ENCODE measurements at regions of chr14 and their contacts with region 1.

Region 1: DNA sequence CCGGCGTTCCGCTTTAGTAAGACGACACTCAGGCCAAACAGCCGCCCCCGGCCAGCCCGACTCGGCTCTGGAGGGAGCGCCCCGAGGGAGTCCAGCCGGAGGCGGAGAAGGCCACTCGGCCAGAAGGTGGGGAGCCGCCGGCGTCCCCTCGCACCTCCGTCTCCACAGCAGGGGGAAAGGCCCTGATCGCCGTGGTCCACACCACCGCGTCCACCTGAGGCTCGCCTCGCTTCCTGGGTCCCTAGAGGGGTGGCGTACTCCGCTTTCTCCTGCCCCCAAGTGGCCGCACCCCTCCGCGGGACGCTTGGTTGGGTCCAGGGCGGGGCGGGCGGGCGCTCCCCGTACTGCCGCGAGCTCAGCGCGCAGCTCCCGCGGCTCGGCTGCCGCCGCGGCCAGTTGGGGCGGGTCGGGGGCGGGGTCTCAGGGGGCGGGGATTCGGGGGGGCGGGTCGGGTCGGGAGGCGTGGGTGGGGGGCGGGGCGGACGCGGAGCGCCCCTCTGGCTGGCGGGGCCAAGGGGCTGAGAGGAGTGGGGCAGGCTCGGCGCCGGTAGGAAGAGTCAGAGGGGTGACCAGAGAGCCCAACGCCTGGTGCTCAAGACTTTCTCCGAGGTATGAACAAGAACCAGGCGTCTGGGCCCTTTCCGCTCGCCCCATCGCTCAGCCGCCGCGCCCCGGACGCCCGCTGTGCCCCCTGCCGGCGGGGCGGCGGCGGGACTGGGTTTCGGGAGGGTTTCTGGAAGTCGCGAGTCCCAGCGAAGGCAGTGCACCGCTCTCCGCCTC is at the start of gene FRMD6:
- DNase-seq: peak; percentile 83
- H3K4me3 ChIP-seq: peak within 1 kb of the TSS; percentile 89 to 96 (median 93)
- H3K27ac ChIP-seq: peak within 1 kb of the TSS; percentile 96
- H3K4me1 ChIP-seq: peaks cover 43% of the 10 kb centered on the region
- H3K27me3 ChIP-seq: no peaks in the 10 kb centered on the region
- CTCF ChIP-seq: peak; percentile 73 to 75
- POLR2A ChIP-seq: peak; percentile 81
- total RNA-seq, gene FRMD6: 92.2 and 97.1 TPM in 2 replicates

Region 2: DNA sequence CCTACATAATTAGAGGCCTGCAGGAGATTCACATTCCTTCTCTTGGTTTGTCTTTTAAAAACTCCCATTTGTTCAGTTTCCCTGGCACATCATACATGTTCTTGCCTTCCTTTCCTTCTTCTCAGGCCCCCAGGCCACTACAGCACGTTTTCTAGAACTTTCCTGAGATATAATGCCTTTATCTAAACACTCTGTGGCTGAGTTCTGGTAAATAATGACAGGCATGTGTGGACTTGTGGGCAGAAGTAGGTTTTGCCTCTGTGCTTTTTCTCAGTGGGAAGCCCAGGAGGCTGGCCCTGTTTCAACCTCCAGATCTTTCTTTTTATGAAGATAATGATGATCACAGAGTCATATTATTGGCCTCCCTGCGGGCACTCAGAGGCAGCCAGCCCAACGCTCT is 294.3 kb before region 1 on chr14:
- CTCF ChIA-PET with region 1: no interaction called
- POLR2A ChIA-PET with region 1: no interaction called
- dilution Hi-C with region 1: no loop called
- intact Hi-C with region 1: no loop called
- DNase-seq: no peak
- H3K4me3 ChIP-seq: no peak overlapping the region
- H3K27ac ChIP-seq: no peak overlapping the region
- H3K4me1 ChIP-seq: peaks cover 9% of the 10 kb centered on the region
- H3K27me3 ChIP-seq: no peaks in the 10 kb centered on the region
- CTCF ChIP-seq: no peak
- POLR2A ChIP-seq: no peak

Region 3: GRCh38 chr14:51382506-51382905 is 269.1 kb before region 1 on chr14:
- CTCF ChIA-PET with region 1: interaction called, 10 read pairs
- POLR2A ChIA-PET with region 1: no interaction called
- dilution Hi-C with region 1: no loop called
- intact Hi-C with region 1: no loop called
- DNase-seq: no peak
- H3K4me3 ChIP-seq: no peak overlapping the region
- H3K27ac ChIP-seq: no peak overlapping the region
- H3K4me1 ChIP-seq: peaks cover 11% of the 10 kb centered on the region
- H3K27me3 ChIP-seq: no peaks in the 10 kb centered on the region
- CTCF ChIP-seq: no peak
- POLR2A ChIP-seq: no peak

Region 4: DNA sequence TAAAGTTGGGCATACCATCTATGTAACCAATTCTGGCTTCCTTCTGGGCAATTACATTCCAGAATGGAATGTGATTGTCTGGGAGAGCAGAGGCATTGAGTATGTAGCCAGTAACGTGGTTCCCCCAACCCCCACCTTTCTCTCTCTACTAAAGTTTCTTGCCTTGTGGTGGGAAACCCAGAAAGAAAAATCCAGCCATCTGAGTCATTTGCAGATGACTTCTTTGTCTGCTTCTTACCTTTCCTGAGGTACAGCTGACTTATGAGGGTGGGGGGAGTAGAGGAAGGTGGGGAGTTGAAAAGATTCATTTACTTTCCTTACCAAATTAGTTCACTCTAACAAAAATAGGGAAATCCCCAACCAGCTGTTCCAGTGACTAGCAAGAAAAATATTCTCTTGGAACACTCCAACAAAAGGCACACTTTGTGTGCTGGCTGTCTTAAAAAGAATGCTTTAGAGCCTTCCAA is 112.0 kb before region 1 on chr14:
- CTCF ChIA-PET with region 1: interaction called, 13 read pairs
- POLR2A ChIA-PET with region 1: interaction called, 4 read pairs
- dilution Hi-C with region 1: no loop called
- intact Hi-C with region 1: loop called (anchors 1 kb)
- DNase-seq: peak; percentile 82
- H3K4me3 ChIP-seq: no peak overlapping the region
- H3K27ac ChIP-seq: peak overlapping the region; percentile 96
- H3K4me1 ChIP-seq: peaks cover 28% of the 10 kb centered on the region
- H3K27me3 ChIP-seq: no peaks in the 10 kb centered on the region
- CTCF ChIP-seq: no peak
- POLR2A ChIP-seq: no peak

Region 5: GRCh38 chr14:51581017-51581881 is 70.3 kb before region 1 on chr14:
- CTCF ChIA-PET with region 1: interaction called, 3 read pairs
- POLR2A ChIA-PET with region 1: interaction called, 4 read pairs
- dilution Hi-C with region 1: no loop called
- intact Hi-C with region 1: loop called (anchors 1 kb)
- DNase-seq: peak; percentile 86
- H3K4me3 ChIP-seq: no peak overlapping the region
- H3K27ac ChIP-seq: peak overlapping the region; percentile 62
- H3K4me1 ChIP-seq: peaks cover 41% of the 10 kb centered on the region
- H3K27me3 ChIP-seq: no peaks in the 10 kb centered on the region
- CTCF ChIP-seq: no peak
- POLR2A ChIP-seq: peak; percentile 24

Region 6: DNA sequence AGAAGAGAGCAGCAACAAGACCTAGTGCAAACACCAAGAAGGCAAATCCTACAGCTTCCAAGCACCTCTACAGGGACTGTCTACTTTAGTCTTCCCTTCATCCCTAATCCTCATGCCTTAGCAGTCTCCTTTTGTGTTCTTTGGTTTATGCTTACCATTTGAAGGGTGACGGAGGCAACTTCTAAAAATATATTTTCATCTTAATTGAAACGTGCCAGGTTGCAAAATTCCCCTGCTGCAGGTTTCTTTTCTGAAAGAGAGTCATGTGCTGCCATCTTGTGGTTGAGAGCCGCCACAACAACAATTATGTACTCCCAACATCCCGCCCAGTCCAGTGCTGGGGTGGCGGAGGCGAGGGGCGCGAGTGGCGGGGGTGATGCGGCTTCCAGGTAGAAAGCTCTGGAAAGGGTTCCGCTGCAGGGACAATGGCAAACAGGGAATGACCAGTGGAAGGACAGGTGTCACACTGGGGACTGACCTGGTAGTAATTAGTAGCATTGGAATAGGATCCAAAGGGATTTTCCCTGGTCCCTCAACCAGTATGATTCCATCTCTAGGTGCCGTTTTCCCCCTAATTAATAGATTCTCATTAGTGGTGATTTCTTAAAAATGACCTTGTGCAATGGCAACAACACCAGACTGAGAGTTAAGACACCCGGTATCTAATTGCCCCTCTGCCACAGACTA is 128.6 kb after region 1 on chr14:
- CTCF ChIA-PET with region 1: interaction called, 21 read pairs
- POLR2A ChIA-PET with region 1: no interaction called
- dilution Hi-C with region 1: no loop called
- intact Hi-C with region 1: loop called (anchors 1 kb)
- DNase-seq: peak; percentile 67
- H3K4me3 ChIP-seq: no peak overlapping the region
- H3K27ac ChIP-seq: no peak overlapping the region
- H3K4me1 ChIP-seq: peaks cover 3% of the 10 kb centered on the region
- H3K27me3 ChIP-seq: peaks cover 18 to 38% of the 10 kb centered on the region in 2 experiments
- CTCF ChIP-seq: peak; percentile 66 to 78
- POLR2A ChIP-seq: no peak

Region 7: DNA sequence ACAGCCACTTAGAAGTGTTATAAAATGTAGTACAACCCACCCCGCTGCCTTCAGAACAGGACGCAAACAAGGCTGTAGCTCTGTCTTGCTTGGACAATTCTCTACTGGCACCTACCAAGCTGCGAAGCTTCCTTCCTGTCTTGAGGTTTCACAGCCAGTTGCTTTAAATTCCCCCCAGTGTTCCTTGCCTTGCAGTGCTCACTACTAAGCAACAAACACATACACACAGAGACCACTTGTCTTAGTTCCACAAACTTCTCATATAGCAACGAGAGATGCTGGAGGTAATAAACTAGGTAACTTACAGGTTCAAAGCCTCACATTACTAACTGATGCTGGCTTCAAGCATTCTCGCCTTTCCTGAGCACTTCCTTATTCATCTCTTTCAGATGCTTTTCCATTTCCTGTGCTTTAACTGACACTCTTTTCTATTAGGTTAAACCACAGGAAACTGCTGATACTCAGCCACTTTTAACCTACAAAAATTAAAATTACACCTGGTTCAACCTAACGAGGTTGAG is 524.5 kb after region 1 on chr14:
- CTCF ChIA-PET with region 1: no interaction called
- POLR2A ChIA-PET with region 1: no interaction called
- dilution Hi-C with region 1: no loop called
- intact Hi-C with region 1: no loop called
- DNase-seq: no peak
- H3K4me3 ChIP-seq: no peak overlapping the region
- H3K27ac ChIP-seq: no peak overlapping the region
- H3K4me1 ChIP-seq: no peaks in the 10 kb centered on the region
- H3K27me3 ChIP-seq: peaks cover 0 to 2% of the 10 kb centered on the region in 2 experiments
- CTCF ChIP-seq: no peak
- POLR2A ChIP-seq: no peak

Measured in endothelial cell of umbilical vein (primary cell).